CD4-positive, alpha-beta T cell (primary cell): ENCODE measurements at regions of chr17 and their contacts with region 1.

Region 1: DNA sequence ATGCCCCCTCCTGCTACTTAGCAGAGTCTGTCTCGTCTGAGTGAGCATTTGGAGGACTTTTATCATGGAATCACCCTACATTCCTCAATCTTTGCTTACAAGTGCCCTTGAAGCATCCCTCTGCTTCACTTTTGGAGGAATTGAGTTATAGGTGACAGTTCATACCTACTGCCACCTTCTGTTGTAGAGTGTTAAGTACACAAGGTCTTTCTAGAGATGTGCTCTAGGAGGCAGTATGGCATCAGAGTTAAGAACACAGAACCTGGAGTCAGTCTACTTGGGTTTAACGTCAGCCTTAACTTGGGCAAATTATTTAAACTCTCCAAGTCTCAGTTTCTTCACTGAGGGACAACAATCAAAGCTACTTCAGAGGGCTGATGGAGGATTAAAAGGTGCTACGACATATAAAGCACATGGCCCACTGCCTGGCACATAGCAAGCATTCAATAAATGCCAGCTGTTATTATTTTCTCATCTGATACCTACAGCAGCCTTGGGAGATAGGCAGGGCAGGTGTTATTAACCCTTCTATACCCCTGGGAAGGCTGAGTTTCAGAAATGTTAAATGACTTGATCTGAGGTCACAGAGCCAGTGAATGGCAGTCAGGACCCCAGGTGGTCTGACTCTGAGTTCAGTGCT is 62.2 kb downstream of the UTP18 start:
- DNase-seq: peak in 3 of 14 experiments; percentile 11 to 32 (median 31)
- ATAC-seq: peak; percentile 78
- H3K4me3 ChIP-seq: no peak overlapping the region
- H3K4me3 Mint-ChIP-seq: no peak overlapping the region
- H3K27ac ChIP-seq: no peak overlapping the region
- H3K27ac Mint-ChIP-seq: no peak overlapping the region
- H3K4me1 ChIP-seq: no peaks in the 10 kb centered on the region
- H3K4me1 Mint-ChIP-seq: no peaks in the 10 kb centered on the region
- H3K27me3 ChIP-seq: peaks cover 0 to 4% of the 10 kb centered on the region in 2 experiments
- H3K27me3 Mint-ChIP-seq: peaks cover 11% of the 10 kb centered on the region
- CTCF ChIP-seq: peak; percentile 53

Region 2: GRCh38 chr17:51362818-51363585 is 40.5 kb after region 1 on chr17:
- CTCF ChIA-PET with region 1: no interaction called
- POLR2A ChIA-PET with region 1: no interaction called
- intact Hi-C with region 1: no loop called
- DNase-seq: no peak
- ATAC-seq: no peak
- H3K4me3 ChIP-seq: no peak overlapping the region
- H3K4me3 Mint-ChIP-seq: no peak overlapping the region
- H3K27ac ChIP-seq: no peak overlapping the region
- H3K27ac Mint-ChIP-seq: no peak overlapping the region
- H3K4me1 ChIP-seq: peaks cover 18% of the 10 kb centered on the region
- H3K4me1 Mint-ChIP-seq: peaks cover 20% of the 10 kb centered on the region
- H3K27me3 ChIP-seq: peaks cover 0 to 2% of the 10 kb centered on the region in 2 experiments
- H3K27me3 Mint-ChIP-seq: no peaks in the 10 kb centered on the region
- CTCF ChIP-seq: no peak

Region 3: GRCh38 chr17:51456942-51457341 is 134.4 kb after region 1 on chr17:
- CTCF ChIA-PET with region 1: no interaction called
- POLR2A ChIA-PET with region 1: no interaction called
- intact Hi-C with region 1: no loop called
- DNase-seq: no peak
- ATAC-seq: no peak
- H3K4me3 ChIP-seq: no peak overlapping the region
- H3K4me3 Mint-ChIP-seq: no peak overlapping the region
- H3K27ac ChIP-seq: no peak overlapping the region
- H3K27ac Mint-ChIP-seq: no peak overlapping the region
- H3K4me1 ChIP-seq: no peaks in the 10 kb centered on the region
- H3K4me1 Mint-ChIP-seq: no peaks in the 10 kb centered on the region
- H3K27me3 ChIP-seq: no peaks in the 10 kb centered on the region
- H3K27me3 Mint-ChIP-seq: no peaks in the 10 kb centered on the region
- CTCF ChIP-seq: no peak

Region 4: GRCh38 chr17:51540151-51540550 is 217.6 kb after region 1 on chr17:
- CTCF ChIA-PET with region 1: no interaction called
- POLR2A ChIA-PET with region 1: no interaction called
- intact Hi-C with region 1: loop called (anchors 1 to 10 kb)
- DNase-seq: peak in 7 of 14 experiments; percentile 0 to 33 (median 30)
- ATAC-seq: peak; percentile 51
- H3K4me3 ChIP-seq: no peak overlapping the region
- H3K4me3 Mint-ChIP-seq: no peak overlapping the region
- H3K27ac ChIP-seq: no peak overlapping the region
- H3K27ac Mint-ChIP-seq: peak overlapping the region; percentile 30
- H3K4me1 ChIP-seq: no peaks in the 10 kb centered on the region
- H3K4me1 Mint-ChIP-seq: peaks cover 15% of the 10 kb centered on the region
- H3K27me3 ChIP-seq: no peaks in the 10 kb centered on the region
- H3K27me3 Mint-ChIP-seq: no peaks in the 10 kb centered on the region
- CTCF ChIP-seq: peak; percentile 51

Region 5: DNA sequence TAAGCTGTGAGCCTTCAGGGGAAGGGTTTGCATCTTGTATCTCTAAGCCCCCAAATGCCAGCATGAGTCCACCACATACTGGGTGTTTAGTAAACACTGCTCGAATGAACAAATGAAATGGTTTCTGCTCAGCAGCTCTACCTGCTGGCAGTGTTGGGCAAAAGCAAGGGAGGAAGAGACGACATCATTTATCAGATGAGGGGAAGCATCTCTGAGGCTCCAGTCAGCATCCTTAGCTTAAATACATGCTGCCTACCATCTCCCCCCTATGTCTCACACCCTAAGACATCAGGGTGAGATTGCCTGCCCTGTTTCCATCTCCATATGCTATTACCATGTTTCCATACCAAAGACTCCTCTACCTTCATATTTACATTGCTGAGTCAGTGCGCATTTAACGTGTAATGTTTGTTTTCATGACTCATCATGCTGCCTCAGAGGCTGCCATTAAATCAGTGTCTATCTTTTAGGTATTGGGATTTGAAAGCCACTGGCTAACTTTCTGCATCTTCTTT is 317.7 kb after region 1 on chr17:
- CTCF ChIA-PET with region 1: no interaction called
- POLR2A ChIA-PET with region 1: no interaction called
- intact Hi-C with region 1: loop called (anchors 1 to 10 kb)
- DNase-seq: peak in 6 of 14 experiments; percentile 2 to 37 (median 17)
- ATAC-seq: no peak
- H3K4me3 ChIP-seq: no peak overlapping the region
- H3K4me3 Mint-ChIP-seq: no peak overlapping the region
- H3K27ac ChIP-seq: no peak overlapping the region
- H3K27ac Mint-ChIP-seq: no peak overlapping the region
- H3K4me1 ChIP-seq: no peaks in the 10 kb centered on the region
- H3K4me1 Mint-ChIP-seq: no peaks in the 10 kb centered on the region
- H3K27me3 ChIP-seq: peaks cover 0 to 6% of the 10 kb centered on the region in 2 experiments
- H3K27me3 Mint-ChIP-seq: peaks cover 15% of the 10 kb centered on the region
- CTCF ChIP-seq: peak; percentile 54

Region 6: DNA sequence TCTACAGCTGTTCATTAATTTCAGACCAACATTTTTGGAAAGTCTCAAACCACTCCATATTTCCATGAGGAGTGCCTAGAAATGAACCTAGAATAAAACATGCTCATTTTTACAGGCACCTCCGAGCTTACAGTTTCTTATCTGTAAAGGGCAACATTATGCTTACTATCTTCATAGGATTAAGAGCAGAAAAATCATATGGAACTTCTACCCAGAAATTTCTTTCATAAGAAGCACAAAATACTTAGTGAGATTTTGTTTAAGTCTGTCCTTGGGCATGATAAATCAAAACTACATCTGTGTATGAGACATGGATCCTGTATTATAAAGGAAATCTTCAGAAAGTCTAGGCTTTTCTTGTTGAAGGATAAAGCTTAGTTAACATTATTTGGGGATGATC is 648.6 kb after region 1 on chr17:
- CTCF ChIA-PET with region 1: no interaction called
- POLR2A ChIA-PET with region 1: no interaction called
- intact Hi-C with region 1: no loop called
- DNase-seq: no peak
- ATAC-seq: no peak
- H3K4me3 ChIP-seq: no peak overlapping the region
- H3K4me3 Mint-ChIP-seq: no peak overlapping the region
- H3K27ac ChIP-seq: no peak overlapping the region
- H3K27ac Mint-ChIP-seq: no peak overlapping the region
- H3K4me1 ChIP-seq: no peaks in the 10 kb centered on the region
- H3K4me1 Mint-ChIP-seq: no peaks in the 10 kb centered on the region
- H3K27me3 ChIP-seq: no peaks in the 10 kb centered on the region
- H3K27me3 Mint-ChIP-seq: no peaks in the 10 kb centered on the region
- CTCF ChIP-seq: no peak